Right ventricle myocardium inferior (tissue), 1 donor: ENCODE measurements at regions of chr1 and their contacts with region 1.

Region 1: GRCh38 chr1:155323798-155324610 is 3.3 kb downstream of the RUSC1 start:
- DNase-seq: peak; percentile 98
- ATAC-seq: peak; percentile 86

Region 2: DNA sequence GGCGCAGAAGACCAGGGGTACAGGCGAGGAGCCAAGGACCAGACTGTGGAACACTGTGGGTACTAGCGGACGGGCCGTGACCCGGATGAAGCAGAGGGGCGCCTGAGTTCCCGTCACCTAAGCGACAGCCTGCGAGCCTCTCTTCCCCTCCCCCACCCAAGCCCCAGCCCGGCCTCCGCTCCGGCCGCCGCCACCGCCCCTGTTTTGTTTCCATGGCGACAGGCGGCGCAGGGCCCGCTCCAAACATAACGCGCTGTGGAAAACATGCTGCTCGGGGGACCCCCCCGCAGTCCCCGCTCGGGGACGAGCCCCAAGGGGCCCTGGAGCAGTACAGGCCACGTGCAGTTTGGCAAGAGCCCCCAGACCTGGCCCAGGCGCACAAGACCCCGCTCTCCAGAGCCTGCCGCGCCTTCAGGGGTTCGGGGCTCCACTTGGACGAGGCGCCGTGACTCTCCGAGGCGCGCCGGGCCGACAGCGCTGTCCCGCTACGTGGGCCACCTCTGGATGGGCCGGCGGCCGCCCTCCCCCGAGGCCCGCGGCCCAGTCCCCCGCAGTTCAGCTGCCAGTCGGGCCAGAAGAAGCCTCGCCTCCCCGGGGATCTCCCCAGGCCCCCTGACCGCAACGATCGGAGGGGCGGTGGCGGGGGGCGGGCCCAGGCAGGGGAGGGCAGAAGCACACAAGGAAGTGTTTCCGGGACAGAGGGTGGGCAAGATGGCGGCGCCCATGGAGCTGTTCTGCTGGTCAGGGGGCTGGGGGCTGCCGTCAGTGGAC is 115.3 kb before region 1 on chr1 and contains the start of gene MTX1:
- intact Hi-C with region 1: loop called (anchors 1 kb)
- DNase-seq: peak; percentile 96
- ATAC-seq: peak; percentile 89
- total RNA-seq, gene MTX1: 16.5 TPM

Region 3: GRCh38 chr1:155250633-155251449 is 73.2 kb before region 1 on chr1:
- intact Hi-C with region 1: loop called (anchors 2 kb)
- DNase-seq: peak; percentile 96
- ATAC-seq: peak; percentile 85

Region 4: DNA sequence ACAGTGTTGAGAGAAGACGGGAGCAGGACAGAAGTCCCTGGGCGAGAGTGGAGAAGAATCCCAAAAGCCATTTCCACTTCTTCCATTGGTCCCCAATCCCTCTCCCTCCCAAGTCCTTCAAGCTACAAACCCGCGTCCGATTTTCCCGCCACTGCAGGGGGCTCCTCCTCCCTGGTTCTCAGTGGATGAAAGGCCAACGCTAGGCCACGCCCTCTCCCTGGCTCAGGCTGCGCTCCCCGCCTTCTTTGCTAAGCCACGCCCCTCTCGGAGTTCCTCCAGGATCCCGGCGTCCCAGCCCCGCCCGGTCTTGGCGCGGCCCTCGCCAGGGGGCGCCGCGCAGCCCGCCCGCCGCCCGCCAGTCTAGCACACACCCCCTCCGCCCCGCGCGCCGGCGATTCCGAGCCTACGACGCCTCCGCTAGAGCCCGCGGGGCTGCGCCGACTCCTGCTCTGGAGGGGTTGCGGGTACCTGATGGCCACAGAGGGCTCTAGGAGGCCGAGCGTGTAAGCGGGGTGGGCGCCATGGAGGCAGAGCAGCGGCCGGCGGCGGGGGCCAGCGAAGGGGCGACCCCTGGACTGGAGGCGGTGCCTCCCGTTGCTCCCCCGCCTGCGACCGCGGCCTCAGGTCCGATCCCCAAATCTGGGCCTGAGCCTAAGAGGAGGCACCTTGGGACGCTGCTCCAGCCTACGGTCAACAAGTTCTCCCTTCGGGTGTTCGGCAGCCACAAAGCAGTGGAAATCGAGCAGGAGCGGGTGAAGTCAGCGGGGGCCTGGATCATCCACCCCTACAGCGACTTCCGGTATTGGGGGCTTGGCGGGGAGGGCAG is 46.7 kb before region 1 on chr1 and contains the start of gene HCN3:
- intact Hi-C with region 1: loop called (anchors 1 kb)
- DNase-seq: peak; percentile 98
- ATAC-seq: peak; percentile 91
- total RNA-seq, gene HCN3: 1.8 TPM

Region 5: GRCh38 chr1:155308493-155309422 is 15.2 kb before region 1 on chr1 and contains the start of gene FDPS:
- intact Hi-C with region 1: no loop called
- DNase-seq: peak; percentile 99
- ATAC-seq: peak; percentile 100
- total RNA-seq, gene FDPS: 80.0 TPM

Region 6: DNA sequence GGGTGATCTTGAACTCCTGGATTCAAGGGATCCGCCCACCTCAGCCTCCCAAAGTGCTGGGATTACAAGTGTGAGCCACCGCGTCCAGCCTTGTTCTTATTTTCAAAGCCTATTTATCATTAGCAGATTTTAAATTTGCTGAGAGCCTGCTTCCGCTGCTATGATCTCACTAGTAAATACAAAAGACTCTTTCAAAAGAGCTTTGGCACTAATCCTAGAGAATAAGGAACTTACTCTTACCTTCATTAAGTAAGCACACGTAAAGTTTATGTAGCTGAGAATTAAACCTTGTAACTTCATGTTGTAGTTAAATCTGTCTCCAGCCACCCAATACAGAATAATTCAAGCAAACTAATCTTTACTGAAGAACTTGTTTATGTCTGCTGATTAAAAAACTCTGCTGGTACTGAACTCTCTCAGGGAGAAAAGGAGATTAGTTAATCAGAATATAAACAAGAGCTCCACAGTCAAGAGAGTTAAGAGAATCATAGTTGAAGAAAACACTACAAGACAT is 69.0 kb after region 1 on chr1:
- intact Hi-C with region 1: no loop called
- DNase-seq: no peak
- ATAC-seq: peak; percentile 62

Region 7: DNA sequence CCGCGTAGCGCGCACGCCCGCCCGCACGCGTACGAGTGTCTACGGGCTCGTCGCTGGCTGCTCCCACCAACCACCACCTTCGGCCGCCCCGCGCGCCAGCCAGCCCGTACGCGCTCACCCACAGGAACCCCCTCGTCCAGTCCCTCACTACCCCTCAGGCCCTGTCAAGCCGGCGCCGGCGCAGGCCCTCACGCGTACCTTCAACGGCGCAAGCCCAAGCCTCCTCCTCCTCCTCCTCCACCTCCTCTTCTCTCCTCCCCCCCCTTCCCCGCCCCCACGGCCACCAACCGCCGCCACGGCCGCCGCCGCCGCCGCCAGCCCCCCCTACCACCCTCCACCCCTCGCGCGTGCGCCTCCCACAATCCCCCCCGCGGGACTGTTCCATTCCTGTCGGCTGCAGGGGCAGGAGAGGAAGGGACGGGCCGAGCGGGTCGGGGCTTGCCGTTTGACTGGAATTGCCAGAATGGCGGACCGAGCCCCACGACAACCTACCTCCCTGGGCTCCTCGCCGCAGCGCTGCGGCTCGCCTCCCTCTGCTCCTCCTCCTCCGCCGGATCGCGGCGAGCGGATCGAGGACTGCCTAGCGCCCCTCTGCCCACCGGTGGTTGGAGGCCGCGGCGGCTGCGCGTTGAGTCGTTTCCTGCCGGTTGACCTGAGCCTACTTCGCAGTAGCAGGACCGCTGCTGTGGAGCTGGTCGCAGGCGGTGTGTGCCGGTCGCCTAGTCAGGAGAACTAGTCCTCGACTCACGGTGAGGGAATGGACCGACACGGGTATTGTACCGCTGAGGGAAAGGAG is 238.8 kb after region 1 on chr1 and contains the start of gene ASH1L:
- intact Hi-C with region 1: loop called (anchors 10 kb)
- DNase-seq: peak; percentile 95
- ATAC-seq: peak; percentile 96
- total RNA-seq, gene ASH1L: 40.3 TPM

Region 8: GRCh38 chr1:155591770-155592169 is 267.8 kb after region 1 on chr1:
- intact Hi-C with region 1: loop called (anchors 10 kb)
- DNase-seq: no peak
- ATAC-seq: peak; percentile 71